Transverse colon (tissue), 4 donors: ENCODE measurements at regions of chr18 and their contacts with region 1.

Region 1: DNA sequence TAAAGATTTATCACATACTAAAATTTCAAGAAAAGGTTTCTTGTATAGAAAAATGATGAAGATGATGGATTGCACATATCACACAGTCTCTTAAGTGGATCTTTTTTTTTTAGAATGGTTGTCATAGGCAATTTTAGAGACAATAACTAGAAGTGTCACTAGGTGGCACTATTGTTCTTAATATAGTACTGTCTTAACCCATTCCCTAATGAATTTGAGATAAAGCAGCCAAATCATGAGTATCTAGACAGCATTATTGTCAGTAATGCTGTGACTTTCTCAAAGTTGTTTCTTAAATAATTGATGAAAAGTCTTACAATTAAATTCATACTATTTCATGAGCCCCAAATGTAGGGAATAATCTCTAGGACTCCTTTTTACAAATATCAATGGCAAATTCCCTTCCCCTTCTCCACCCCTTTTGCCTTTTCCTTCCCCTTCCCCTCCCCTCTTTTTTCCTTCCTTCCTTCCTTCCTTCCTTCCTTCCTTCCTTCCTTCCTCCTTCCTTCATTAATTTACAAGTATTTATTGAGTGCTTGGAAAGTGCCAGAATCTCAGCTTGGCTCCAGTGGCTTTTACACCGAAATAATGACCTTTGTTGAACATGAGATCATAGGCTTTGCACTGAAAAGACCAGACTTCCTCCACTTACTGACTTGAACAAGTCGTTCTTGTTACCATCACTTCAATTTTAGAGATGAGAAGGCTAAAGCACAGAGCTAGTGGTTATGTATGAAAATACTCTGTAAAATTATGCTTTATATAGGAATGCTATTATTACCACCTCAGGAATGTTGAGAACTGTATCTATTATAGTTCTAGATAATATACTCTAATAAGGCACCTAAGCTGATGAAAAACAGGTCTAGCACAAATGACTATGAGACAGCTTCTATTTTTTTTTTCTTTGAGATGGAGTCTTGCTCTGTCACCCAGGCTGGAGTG is 19.8 kb downstream of the MYL12B start:
- DNase-seq: no peak
- H3K4me3 ChIP-seq: no peak overlapping the region
- H3K27ac ChIP-seq: peak overlapping the region in 1 of 4 donors; percentile 9
- H3K4me1 ChIP-seq: no peaks in the 10 kb centered on the region
- H3K27me3 ChIP-seq: no peaks in the 10 kb centered on the region
- CTCF ChIP-seq: peak; percentile 64 to 85 (median 78)
- EP300 ChIP-seq: no peak
- POLR2A ChIP-seq: no peak

Region 2: GRCh38 chr18:3585656-3586509 is 304.2 kb after region 1 on chr18:
- in situ Hi-C with region 1: loop called in 3 of 4 experiments (anchors 5 to 25 kb)
- intact Hi-C with region 1: no loop called
- DNase-seq: peak; percentile 90
- H3K4me3 ChIP-seq: no peak overlapping the region
- H3K27ac ChIP-seq: peak overlapping the region in 1 of 4 donors; percentile 14
- H3K4me1 ChIP-seq: peaks cover 0 to 25% (median 8%) of the 10 kb centered on the region in 4 donors
- H3K27me3 ChIP-seq: no peaks in the 10 kb centered on the region
- CTCF ChIP-seq: peak; percentile 76 to 92 (median 79)
- EP300 ChIP-seq: no peak
- POLR2A ChIP-seq: no peak

Region 3: GRCh38 chr18:3665780-3666525 is 384.2 kb after region 1 on chr18:
- in situ Hi-C with region 1: loop called (anchors 5 to 10 kb)
- intact Hi-C with region 1: loop called (anchors 5 kb)
- DNase-seq: peak; percentile 88
- H3K4me3 ChIP-seq: peak overlapping the region in 3 of 4 donors; percentile 5 to 33 (median 11)
- H3K27ac ChIP-seq: peak overlapping the region; percentile 78 to 84 (median 82)
- H3K4me1 ChIP-seq: peaks cover 0 to 27% (median 11%) of the 10 kb centered on the region in 4 donors
- H3K27me3 ChIP-seq: no peaks in the 10 kb centered on the region
- CTCF ChIP-seq: peak; percentile 91 to 98 (median 92)
- EP300 ChIP-seq: no peak
- POLR2A ChIP-seq: no peak

Region 4: DNA sequence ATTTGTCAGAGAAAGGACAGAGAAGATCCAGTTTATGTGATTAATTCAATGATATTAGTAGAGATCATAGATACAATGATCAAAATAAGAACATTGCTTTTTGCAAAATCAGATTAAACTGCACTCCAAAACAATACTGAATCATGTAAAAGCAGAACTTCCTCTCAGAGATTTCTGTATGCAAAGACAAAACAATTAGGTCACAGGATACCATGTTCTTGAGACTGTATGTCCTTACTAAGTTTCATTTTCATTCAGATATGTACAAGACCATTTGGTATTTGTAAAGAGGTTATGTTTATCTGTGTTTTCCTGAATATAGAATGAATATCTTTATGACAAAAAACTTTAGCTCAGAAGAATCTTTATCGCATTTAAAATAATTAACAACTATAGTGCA is 1011.6 kb after region 1 on chr18:
- in situ Hi-C with region 1: no loop called
- intact Hi-C with region 1: no loop called
- DNase-seq: no peak
- H3K4me3 ChIP-seq: no peak overlapping the region
- H3K27ac ChIP-seq: no peak overlapping the region
- H3K4me1 ChIP-seq: no peaks in the 10 kb centered on the region
- H3K27me3 ChIP-seq: no peaks in the 10 kb centered on the region
- CTCF ChIP-seq: no peak
- EP300 ChIP-seq: no peak
- POLR2A ChIP-seq: no peak